Psoas muscle (tissue), 8 donors: ENCODE measurements at regions of chr14 and their contacts with region 1.

Region 1: GRCh38 chr14:69818757-69819191 is 21.7 kb upstream of the SLC10A1 start:
- DNase-seq: peak; percentile 23 to 64
- ATAC-seq: peak; percentile 83 to 91 (median 85)
- H3K4me3 ChIP-seq: no peak overlapping the region
- H3K27ac ChIP-seq: no peak overlapping the region
- H3K4me1 ChIP-seq: no peaks in the 10 kb centered on the region
- H3K27me3 ChIP-seq: no peaks in the 10 kb centered on the region
- CTCF ChIP-seq: peak; percentile 87

Region 2: DNA sequence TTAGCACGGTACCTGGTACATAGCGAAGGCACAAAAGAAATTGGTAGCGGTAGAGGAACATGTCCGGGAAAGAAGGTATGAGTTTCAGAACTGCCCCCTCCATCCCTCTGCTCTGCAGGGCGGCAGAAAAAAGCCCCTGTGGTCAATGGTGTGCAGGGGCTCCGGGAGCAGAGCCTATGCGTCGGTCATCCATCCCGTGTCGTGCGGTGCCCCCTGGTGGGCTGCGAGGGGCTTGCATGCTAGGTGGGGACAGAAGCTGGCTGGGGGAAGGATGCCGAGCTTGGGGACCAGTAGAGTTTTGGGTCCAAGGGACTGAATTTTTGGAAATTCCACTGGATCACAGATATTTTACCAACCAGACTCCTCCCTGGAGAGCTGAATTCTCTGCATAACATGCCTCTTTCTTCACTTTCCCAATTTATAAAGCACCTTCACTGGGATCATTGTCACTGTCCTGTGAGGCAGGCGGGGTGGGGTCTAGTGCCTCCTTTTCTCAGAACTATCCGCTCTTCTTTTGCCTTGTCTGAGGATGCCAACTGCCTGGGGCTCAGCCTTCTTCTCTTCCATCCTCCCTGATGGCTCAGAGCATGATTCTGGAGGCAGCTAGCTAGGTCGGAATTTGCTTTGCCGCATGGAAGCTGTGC is 209.1 kb after region 1 on chr14:
- intact Hi-C with region 1: loop called (anchors 1 to 2 kb)
- DNase-seq: peak; percentile 76 to 88
- ATAC-seq: peak; percentile 89 to 96 (median 92)
- H3K4me3 ChIP-seq: no peak overlapping the region
- H3K27ac ChIP-seq: no peak overlapping the region
- H3K4me1 ChIP-seq: no peaks in the 10 kb centered on the region
- H3K27me3 ChIP-seq: no peaks in the 10 kb centered on the region
- CTCF ChIP-seq: peak; percentile 96

Region 3: GRCh38 chr14:70317969-70318634 is 499.3 kb after region 1 on chr14:
- intact Hi-C with region 1: loop called (anchors 5 to 10 kb)
- DNase-seq: no peak
- ATAC-seq: peak; percentile 84 to 89 (median 86)
- H3K4me3 ChIP-seq: no peak overlapping the region
- H3K27ac ChIP-seq: no peak overlapping the region
- H3K4me1 ChIP-seq: no peaks in the 10 kb centered on the region
- H3K27me3 ChIP-seq: no peaks in the 10 kb centered on the region
- CTCF ChIP-seq: peak; percentile 45